MCF 10A (cell line): ENCODE measurements at regions of chr7 and their contacts with region 1.

Region 1: GRCh38 chr7:110442381-110442837 is 648.5 kb upstream of the LRRN3 start:
- DNase-seq: peak; percentile 71
- H3K4me3 Mint-ChIP-seq: no peak overlapping the region
- H3K27ac Mint-ChIP-seq: no peak overlapping the region
- H3K4me1 Mint-ChIP-seq: no peaks in the 10 kb centered on the region
- H3K27me3 Mint-ChIP-seq: no peaks in the 10 kb centered on the region
- CTCF ChIP-seq: peak; percentile 77

Region 2: GRCh38 chr7:108613112-108613759 is 1829.2 kb before region 1 on chr7:
- CTCF ChIA-PET with region 1: interaction called, 3 read pairs
- POLR2A ChIA-PET with region 1: no interaction called
- intact Hi-C with region 1: loop called (anchors 5 kb)
- DNase-seq: peak; percentile 56
- H3K4me3 Mint-ChIP-seq: no peak overlapping the region
- H3K27ac Mint-ChIP-seq: no peak overlapping the region
- H3K4me1 Mint-ChIP-seq: no peaks in the 10 kb centered on the region
- H3K27me3 Mint-ChIP-seq: peaks cover 40% of the 10 kb centered on the region
- CTCF ChIP-seq: peak; percentile 53

Region 3: DNA sequence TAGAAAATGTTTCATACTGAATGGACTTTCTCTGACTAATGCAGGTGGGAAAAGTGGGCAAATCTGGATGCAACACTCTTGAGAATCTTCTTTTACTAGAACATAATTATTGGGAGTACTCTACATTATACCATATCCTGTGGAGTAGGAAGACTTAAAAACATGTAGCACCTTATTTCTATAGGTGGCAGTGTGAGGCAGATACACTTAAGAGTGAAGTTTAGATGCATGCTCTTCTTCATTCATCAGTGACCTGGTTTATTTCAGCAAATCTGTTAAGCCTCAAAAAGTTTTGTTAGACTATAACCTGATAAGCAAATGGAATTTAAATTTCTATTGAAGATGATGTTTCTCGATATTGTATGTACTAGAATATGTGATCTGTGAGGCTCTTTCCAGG is 438.6 kb before region 1 on chr7:
- CTCF ChIA-PET with region 1: no interaction called
- POLR2A ChIA-PET with region 1: no interaction called
- intact Hi-C with region 1: loop called (anchors 5 kb)
- DNase-seq: peak; percentile 8
- H3K4me3 Mint-ChIP-seq: no peak overlapping the region
- H3K27ac Mint-ChIP-seq: no peak overlapping the region
- H3K4me1 Mint-ChIP-seq: no peaks in the 10 kb centered on the region
- H3K27me3 Mint-ChIP-seq: no peaks in the 10 kb centered on the region
- CTCF ChIP-seq: no peak

Region 4: GRCh38 chr7:110090110-110090769 is 352.2 kb before region 1 on chr7:
- CTCF ChIA-PET with region 1: interaction called, 3 read pairs
- POLR2A ChIA-PET with region 1: no interaction called
- intact Hi-C with region 1: loop called (anchors 1 kb)
- DNase-seq: peak; percentile 56
- H3K4me3 Mint-ChIP-seq: no peak overlapping the region
- H3K27ac Mint-ChIP-seq: no peak overlapping the region
- H3K4me1 Mint-ChIP-seq: no peaks in the 10 kb centered on the region
- H3K27me3 Mint-ChIP-seq: no peaks in the 10 kb centered on the region
- CTCF ChIP-seq: peak; percentile 60

Region 5: GRCh38 chr7:110373416-110373815 is 69.0 kb before region 1 on chr7:
- CTCF ChIA-PET with region 1: no interaction called
- POLR2A ChIA-PET with region 1: no interaction called
- intact Hi-C with region 1: no loop called
- DNase-seq: no peak
- H3K4me3 Mint-ChIP-seq: no peak overlapping the region
- H3K27ac Mint-ChIP-seq: no peak overlapping the region
- H3K4me1 Mint-ChIP-seq: no peaks in the 10 kb centered on the region
- H3K27me3 Mint-ChIP-seq: no peaks in the 10 kb centered on the region
- CTCF ChIP-seq: no peak

Region 6: DNA sequence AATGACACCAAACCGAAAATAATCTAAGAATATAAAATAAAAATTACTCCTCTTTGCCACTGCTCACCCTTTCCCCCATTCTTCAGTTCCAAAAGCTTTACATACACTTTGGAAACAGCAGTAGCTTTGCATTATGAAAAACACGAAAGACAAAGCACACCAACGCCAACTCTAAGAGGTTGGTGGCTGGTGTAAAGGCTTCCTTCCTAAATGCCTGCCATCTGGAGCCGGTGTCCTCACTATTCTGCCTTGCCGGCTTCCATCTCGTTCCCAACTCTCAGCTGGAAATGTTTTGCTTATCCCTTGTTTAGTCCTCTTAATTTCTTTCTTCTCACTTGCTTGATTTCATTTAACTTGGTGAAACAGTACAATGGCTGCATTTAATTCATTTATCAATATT is 367.4 kb after region 1 on chr7:
- CTCF ChIA-PET with region 1: no interaction called
- POLR2A ChIA-PET with region 1: no interaction called
- intact Hi-C with region 1: no loop called
- DNase-seq: no peak
- H3K4me3 Mint-ChIP-seq: no peak overlapping the region
- H3K27ac Mint-ChIP-seq: no peak overlapping the region
- H3K4me1 Mint-ChIP-seq: no peaks in the 10 kb centered on the region
- H3K27me3 Mint-ChIP-seq: no peaks in the 10 kb centered on the region
- CTCF ChIP-seq: no peak